Esophagus muscularis mucosa (tissue), 4 donors: ENCODE measurements at regions of chr20 and their contacts with region 1.

Region 1: DNA sequence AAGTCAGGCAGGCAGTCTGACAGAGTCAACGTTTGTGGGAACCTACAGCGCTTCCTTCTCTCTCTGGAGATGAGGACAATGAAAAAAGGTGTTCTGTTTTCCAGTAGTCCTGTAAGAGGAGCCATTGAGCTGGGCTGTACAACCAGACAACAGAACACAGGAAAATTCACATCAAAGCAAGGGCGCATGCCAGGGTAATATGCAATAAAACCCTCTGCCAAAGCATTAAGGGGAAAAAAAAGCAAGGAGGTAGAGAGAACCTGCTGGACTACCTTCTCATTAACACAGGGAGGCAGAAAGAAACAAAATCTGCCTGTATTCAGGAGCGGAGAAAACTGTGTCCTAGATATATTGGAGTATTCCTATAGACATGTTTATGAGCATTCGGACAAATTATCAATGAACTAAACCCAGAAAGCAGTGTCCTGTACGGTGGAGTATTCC is 1.3 kb downstream of the RNF24 start:
- DNase-seq: no peak
- H3K4me3 ChIP-seq: peak overlapping the region; percentile 60 to 98 (median 96)
- H3K27ac ChIP-seq: peak overlapping the region; percentile 85 to 91 (median 90)
- H3K4me1 ChIP-seq: peaks cover 10 to 43% (median 38%) of the 10 kb centered on the region in 4 donors
- H3K27me3 ChIP-seq: no peaks in the 10 kb centered on the region
- CTCF ChIP-seq: peak; percentile 48 to 62 (median 51)
- EP300 ChIP-seq: no peak
- POLR2A ChIP-seq: no peak

Region 2: DNA sequence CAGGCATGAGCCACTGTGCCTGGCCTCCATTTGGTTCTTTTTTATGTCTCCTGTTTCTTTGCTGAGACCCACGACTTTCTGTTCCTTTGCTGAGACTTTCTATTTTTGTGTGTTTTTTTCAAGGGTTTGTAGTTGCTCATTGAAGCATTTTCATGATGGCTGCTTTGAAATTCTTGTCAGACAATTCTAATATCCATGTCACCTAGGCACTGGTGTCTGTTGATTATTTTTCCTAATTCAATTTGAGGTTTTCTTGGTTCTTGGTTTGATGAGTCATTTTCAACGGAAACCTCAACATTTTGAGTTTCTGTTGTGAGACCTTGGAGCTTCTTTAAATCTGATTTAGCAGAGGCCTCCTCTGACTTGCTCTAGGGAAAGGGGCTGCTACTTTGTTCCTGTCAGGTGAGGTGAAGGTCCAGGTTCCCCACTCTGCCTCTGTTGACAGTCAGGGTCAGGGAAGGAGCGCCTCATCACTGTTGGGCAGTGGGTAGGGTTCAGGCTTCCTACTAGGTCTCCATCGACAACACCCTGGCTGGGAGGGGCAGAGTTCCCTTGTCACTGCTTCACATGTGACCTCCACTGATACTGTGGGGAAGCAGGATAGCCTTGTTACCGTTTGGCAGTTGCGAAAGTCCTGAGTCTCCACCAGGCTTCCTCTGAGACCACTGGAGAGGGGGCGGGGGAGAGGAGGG is 68.5 kb after region 1 on chr20:
- intact Hi-C with region 1: loop called (anchors 2 kb)
- DNase-seq: no peak
- H3K4me3 ChIP-seq: no peak overlapping the region
- H3K27ac ChIP-seq: peak overlapping the region in 2 of 4 donors; percentile 11 to 26
- H3K4me1 ChIP-seq: peaks cover 13 to 25% (median 17%) of the 10 kb centered on the region in 4 donors
- H3K27me3 ChIP-seq: no peaks in the 10 kb centered on the region
- CTCF ChIP-seq: no peak
- EP300 ChIP-seq: no peak
- POLR2A ChIP-seq: no peak

Region 3: DNA sequence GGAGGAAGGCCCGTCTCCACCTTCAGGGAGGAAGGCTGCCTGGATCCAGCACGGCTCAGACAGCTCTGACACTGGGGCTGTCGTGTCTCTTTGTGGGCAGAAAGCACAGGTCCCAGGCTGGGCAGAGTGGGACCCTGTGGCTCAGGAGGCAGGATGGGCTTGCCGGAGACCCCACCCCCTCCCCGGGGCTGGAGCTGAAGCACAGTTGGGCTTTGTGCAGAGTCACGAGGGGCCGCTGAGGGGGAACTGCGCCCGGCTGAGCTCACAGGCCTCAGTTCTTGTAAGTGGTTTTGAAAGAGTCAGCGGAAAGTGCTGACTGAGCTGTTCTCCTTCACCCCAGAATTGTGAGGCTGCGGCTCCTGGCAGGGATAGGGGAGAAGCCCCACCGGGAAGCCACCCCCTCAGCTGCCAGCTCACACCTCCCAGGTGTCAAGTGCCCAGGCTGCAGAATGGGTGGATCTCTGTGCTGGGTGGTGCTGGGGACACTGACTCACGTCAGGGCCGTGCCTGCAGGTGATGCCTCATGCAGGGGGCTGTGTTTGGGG is 146.8 kb after region 1 on chr20:
- intact Hi-C with region 1: loop called (anchors 10 kb)
- DNase-seq: no peak
- H3K4me3 ChIP-seq: no peak overlapping the region
- H3K27ac ChIP-seq: peak overlapping the region in 3 of 4 donors; percentile 1 to 19 (median 14)
- H3K4me1 ChIP-seq: peaks cover 18 to 22% (median 19%) of the 10 kb centered on the region in 4 donors
- H3K27me3 ChIP-seq: no peaks in the 10 kb centered on the region
- CTCF ChIP-seq: no peak
- EP300 ChIP-seq: no peak
- POLR2A ChIP-seq: no peak